Mammary epithelial cell (primary cell): ENCODE measurements at regions of chr3 and their contacts with region 1.

Region 1: GRCh38 chr3:41881233-41881821 is 80.6 kb downstream of the ULK4 start:
- DNase-seq: peak; percentile 29
- H3K4me3 ChIP-seq: no peak overlapping the region
- H3K27ac ChIP-seq: no peak overlapping the region
- H3K4me1 ChIP-seq: no peaks in the 10 kb centered on the region
- H3K27me3 ChIP-seq: no peaks in the 10 kb centered on the region
- CTCF ChIP-seq: peak; percentile 54 to 55

Region 2: DNA sequence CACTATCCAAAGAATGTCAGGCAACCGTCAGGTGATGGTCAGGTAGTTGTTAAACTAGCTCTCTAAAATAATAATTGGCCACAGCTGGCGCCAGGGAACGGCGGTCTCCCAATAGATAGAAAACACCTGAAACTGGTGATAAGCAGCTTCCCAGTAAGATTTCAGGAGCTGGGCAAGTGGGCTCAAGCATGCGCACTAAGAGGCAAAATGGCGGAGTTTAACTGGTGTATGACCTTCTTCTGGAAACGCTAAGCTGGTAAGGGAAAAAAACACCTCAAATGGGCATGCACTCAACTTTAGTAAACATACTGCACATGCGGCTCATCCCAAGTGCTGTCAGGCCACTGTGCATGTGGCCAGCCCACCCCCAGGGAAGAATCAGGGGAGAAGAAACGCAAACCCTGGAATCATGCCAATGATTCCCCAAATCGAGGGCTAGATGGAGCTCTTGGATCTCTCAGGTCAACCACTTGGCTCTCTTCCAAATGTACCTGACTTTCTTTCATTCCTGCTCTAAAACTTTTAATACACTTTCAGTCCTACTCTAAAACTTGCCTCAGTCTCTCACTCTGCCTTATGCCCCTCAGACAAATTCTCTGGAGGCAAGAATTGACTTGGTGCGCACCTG is 1161.6 kb before region 1 on chr3:
- CTCF ChIA-PET with region 1: no interaction called
- dilution Hi-C with region 1: no loop called
- in situ Hi-C with region 1: no loop called
- intact Hi-C with region 1: loop called (anchors 2 kb)
- DNase-seq: peak; percentile 55
- H3K4me3 ChIP-seq: no peak overlapping the region
- H3K27ac ChIP-seq: no peak overlapping the region
- H3K4me1 ChIP-seq: peaks cover 15% of the 10 kb centered on the region
- H3K27me3 ChIP-seq: no peaks in the 10 kb centered on the region
- CTCF ChIP-seq: peak; percentile 24 to 75

Region 3: DNA sequence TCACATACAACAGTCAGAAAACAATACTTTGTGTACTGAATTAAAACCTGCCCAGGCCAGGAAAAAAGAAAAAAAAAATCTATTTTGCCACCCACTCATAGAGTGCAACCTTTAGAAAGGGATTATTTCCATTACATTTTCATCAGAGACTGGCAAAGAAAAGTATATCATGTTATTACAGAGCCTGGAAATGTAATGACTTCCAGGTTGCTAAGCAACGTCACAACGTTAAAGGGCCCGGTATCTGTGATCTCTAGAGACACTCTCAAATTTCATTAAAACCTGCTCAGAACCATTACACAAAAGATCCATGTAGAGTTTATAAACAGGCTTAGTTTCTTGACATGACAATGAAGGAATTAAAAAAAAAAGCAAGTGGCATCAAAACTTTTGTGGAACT is 511.5 kb before region 1 on chr3:
- CTCF ChIA-PET with region 1: no interaction called
- dilution Hi-C with region 1: no loop called
- in situ Hi-C with region 1: no loop called
- intact Hi-C with region 1: loop called (anchors 5 kb)
- DNase-seq: no peak
- H3K4me3 ChIP-seq: no peak overlapping the region
- H3K27ac ChIP-seq: no peak overlapping the region
- H3K4me1 ChIP-seq: no peaks in the 10 kb centered on the region
- H3K27me3 ChIP-seq: no peaks in the 10 kb centered on the region
- CTCF ChIP-seq: no peak

Region 4: GRCh38 chr3:41893977-41894376 is 12.7 kb after region 1 on chr3:
- CTCF ChIA-PET with region 1: no interaction called
- dilution Hi-C with region 1: no loop called
- in situ Hi-C with region 1: no loop called
- intact Hi-C with region 1: no loop called
- DNase-seq: peak; percentile 36
- H3K4me3 ChIP-seq: no peak overlapping the region
- H3K27ac ChIP-seq: no peak overlapping the region
- H3K4me1 ChIP-seq: no peaks in the 10 kb centered on the region
- H3K27me3 ChIP-seq: no peaks in the 10 kb centered on the region
- CTCF ChIP-seq: peak; percentile 29 to 54